CD8-positive, alpha-beta T cell (primary cell): ENCODE measurements at regions of chrX and their contacts with region 1.

Region 1: GRCh38 chrX:120560842-120561633 is at the start of gene CUL4B:
- DNase-seq: peak; percentile 80 to 96 (median 92)
- ATAC-seq: peak; percentile 89
- H3K4me3 ChIP-seq: peak within 1 kb of the TSS; percentile 66 to 86
- H3K4me3 Mint-ChIP-seq: peak within 1 kb of the TSS; percentile 98
- H3K27ac ChIP-seq: peak within 1 kb of the TSS; percentile 81 to 99
- H3K27ac Mint-ChIP-seq: peak within 1 kb of the TSS; percentile 98
- H3K4me1 ChIP-seq: peaks cover 25% of the 10 kb centered on the region
- H3K4me1 Mint-ChIP-seq: peaks cover 29% of the 10 kb centered on the region
- H3K27me3 ChIP-seq: no peaks in the 10 kb centered on the region
- H3K27me3 Mint-ChIP-seq: no peaks in the 10 kb centered on the region
- CTCF ChIP-seq: no peak
- total RNA-seq, gene CUL4B: 25.3 to 30.0 TPM

Region 2: GRCh38 chrX:119943185-119943988 is 617.7 kb before region 1 on chrX and contains the start of gene NKAP:
- CTCF ChIA-PET with region 1: no interaction called
- POLR2A ChIA-PET with region 1: no interaction called
- intact Hi-C with region 1: loop called in 1 of 2 experiments (anchors 2 kb)
- DNase-seq: peak; percentile 59 to 90 (median 78)
- ATAC-seq: peak; percentile 82
- H3K4me3 ChIP-seq: peak within 1 kb of the TSS; percentile 94
- H3K4me3 Mint-ChIP-seq: peak within 1 kb of the TSS; percentile 97
- H3K27ac ChIP-seq: peak within 1 kb of the TSS; percentile 91 to 93
- H3K27ac Mint-ChIP-seq: peak within 1 kb of the TSS; percentile 97
- H3K4me1 ChIP-seq: peaks cover 18% of the 10 kb centered on the region
- H3K4me1 Mint-ChIP-seq: peaks cover 24% of the 10 kb centered on the region
- H3K27me3 ChIP-seq: no peaks in the 10 kb centered on the region
- H3K27me3 Mint-ChIP-seq: peaks cover under 1% of the 10 kb centered on the region
- CTCF ChIP-seq: no peak
- total RNA-seq, gene NKAP: 17.4 to 20.1 TPM

Region 3: GRCh38 chrX:120250522-120251271 is 310.3 kb before region 1 on chrX and contains the start of gene ZBTB33:
- CTCF ChIA-PET with region 1: no interaction called
- POLR2A ChIA-PET with region 1: no interaction called
- intact Hi-C with region 1: loop called (anchors 2 to 10 kb)
- DNase-seq: peak; percentile 68 to 94 (median 79)
- ATAC-seq: peak; percentile 99
- H3K4me3 ChIP-seq: peak within 1 kb of the TSS; percentile 58 to 68
- H3K4me3 Mint-ChIP-seq: peak within 1 kb of the TSS; percentile 92
- H3K27ac ChIP-seq: peak within 1 kb of the TSS; percentile 82 to 91
- H3K27ac Mint-ChIP-seq: peak within 1 kb of the TSS; percentile 98
- H3K4me1 ChIP-seq: no peaks in the 10 kb centered on the region
- H3K4me1 Mint-ChIP-seq: peaks cover 37% of the 10 kb centered on the region
- H3K27me3 ChIP-seq: no peaks in the 10 kb centered on the region
- H3K27me3 Mint-ChIP-seq: peaks cover 2% of the 10 kb centered on the region
- CTCF ChIP-seq: peak; percentile 52
- total RNA-seq, gene ZBTB33: 26.4 to 30.7 TPM

Region 4: GRCh38 chrX:120457766-120458180 is 103.3 kb before region 1 on chrX:
- CTCF ChIA-PET with region 1: no interaction called
- POLR2A ChIA-PET with region 1: no interaction called
- intact Hi-C with region 1: no loop called
- DNase-seq: peak in 3 of 9 experiments; percentile 16 to 39 (median 20)
- ATAC-seq: peak; percentile 86
- H3K4me3 ChIP-seq: no peak overlapping the region
- H3K4me3 Mint-ChIP-seq: no peak overlapping the region
- H3K27ac ChIP-seq: peak overlapping the region in 1 of 2 experiments; percentile 10
- H3K27ac Mint-ChIP-seq: peak overlapping the region; percentile 78
- H3K4me1 ChIP-seq: peaks cover 24% of the 10 kb centered on the region
- H3K4me1 Mint-ChIP-seq: peaks cover 62% of the 10 kb centered on the region
- H3K27me3 ChIP-seq: no peaks in the 10 kb centered on the region
- H3K27me3 Mint-ChIP-seq: no peaks in the 10 kb centered on the region
- CTCF ChIP-seq: no peak

Region 5: DNA sequence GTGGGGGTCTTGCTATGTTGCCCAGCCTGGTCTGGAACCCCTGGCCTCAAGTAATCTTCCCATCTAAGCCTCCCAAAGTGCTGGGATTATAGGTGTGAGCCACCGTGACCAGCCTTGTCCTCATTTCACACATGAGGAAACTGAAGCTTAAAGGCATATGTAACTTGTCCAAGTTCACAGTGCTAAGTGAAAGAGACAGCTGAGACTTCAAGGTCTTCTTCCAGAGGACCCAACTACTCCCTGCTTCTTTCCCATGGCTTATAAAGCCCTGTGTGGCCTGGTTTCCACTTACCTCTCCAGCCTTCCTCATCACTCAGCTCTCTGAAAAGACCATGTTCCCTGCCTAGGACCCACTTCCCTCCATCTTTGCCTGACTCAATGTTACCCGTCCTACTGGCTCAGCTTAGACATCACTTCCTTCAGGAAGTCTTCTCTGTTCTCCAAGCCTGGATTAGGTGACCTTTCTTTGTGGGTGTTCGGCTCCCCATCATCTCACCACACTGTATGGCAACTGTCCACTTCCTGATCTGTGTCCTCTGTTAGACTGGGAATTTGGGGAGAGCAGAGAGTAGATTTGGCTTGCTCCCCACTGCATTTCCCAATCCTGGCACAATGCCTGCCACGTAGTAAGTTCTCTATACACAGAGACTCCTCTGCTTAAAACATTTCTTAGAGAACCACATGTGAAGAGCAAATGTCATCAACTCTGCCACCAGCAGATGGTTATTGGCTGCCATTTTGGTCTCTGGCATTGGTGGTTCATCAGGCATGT is 61.6 kb before region 1 on chrX:
- CTCF ChIA-PET with region 1: no interaction called
- POLR2A ChIA-PET with region 1: no interaction called
- intact Hi-C with region 1: loop called in 1 of 2 experiments (anchors 1 kb)
- DNase-seq: no peak
- ATAC-seq: no peak
- H3K4me3 ChIP-seq: no peak overlapping the region
- H3K4me3 Mint-ChIP-seq: no peak overlapping the region
- H3K27ac ChIP-seq: no peak overlapping the region
- H3K27ac Mint-ChIP-seq: no peak overlapping the region
- H3K4me1 ChIP-seq: no peaks in the 10 kb centered on the region
- H3K4me1 Mint-ChIP-seq: peaks cover 5% of the 10 kb centered on the region
- H3K27me3 ChIP-seq: no peaks in the 10 kb centered on the region
- H3K27me3 Mint-ChIP-seq: no peaks in the 10 kb centered on the region
- CTCF ChIP-seq: no peak

Region 6: GRCh38 chrX:120629667-120630537 is 68.9 kb after region 1 on chrX and contains the start of gene C1GALT1C1:
- CTCF ChIA-PET with region 1: no interaction called
- POLR2A ChIA-PET with region 1: interaction called, 9 read pairs
- intact Hi-C with region 1: loop called (anchors 1 kb)
- DNase-seq: peak; percentile 80 to 96 (median 89)
- ATAC-seq: peak; percentile 91
- H3K4me3 ChIP-seq: peak within 1 kb of the TSS; percentile 84 to 96
- H3K4me3 Mint-ChIP-seq: peak within 1 kb of the TSS; percentile 90
- H3K27ac ChIP-seq: peak within 1 kb of the TSS; percentile 95 to 96
- H3K27ac Mint-ChIP-seq: peak within 1 kb of the TSS; percentile 97
- H3K4me1 ChIP-seq: peaks cover 13% of the 10 kb centered on the region
- H3K4me1 Mint-ChIP-seq: peaks cover 23% of the 10 kb centered on the region
- H3K27me3 ChIP-seq: no peaks in the 10 kb centered on the region
- H3K27me3 Mint-ChIP-seq: no peaks in the 10 kb centered on the region
- CTCF ChIP-seq: no peak
- total RNA-seq, gene C1GALT1C1: 1.1 to 1.9 TPM